GM10248 (cell line): ENCODE measurements at regions of chr3 and their contacts with region 1.

Region 1: GRCh38 chr3:12796171-12797123 is at the start of gene CAND2:
- DNase-seq: peak; percentile 43
- CTCF ChIP-seq: no peak

Region 2: GRCh38 chr3:12782172-12782815 is 14.2 kb before region 1 on chr3:
- CTCF ChIA-PET with region 1: interaction called, 36 read pairs
- POLR2A ChIA-PET with region 1: no interaction called
- DNase-seq: no peak
- CTCF ChIP-seq: no peak